Ascending aorta (tissue), 2 donors: ENCODE measurements at regions of chr1 and their contacts with region 1.

Region 1: DNA sequence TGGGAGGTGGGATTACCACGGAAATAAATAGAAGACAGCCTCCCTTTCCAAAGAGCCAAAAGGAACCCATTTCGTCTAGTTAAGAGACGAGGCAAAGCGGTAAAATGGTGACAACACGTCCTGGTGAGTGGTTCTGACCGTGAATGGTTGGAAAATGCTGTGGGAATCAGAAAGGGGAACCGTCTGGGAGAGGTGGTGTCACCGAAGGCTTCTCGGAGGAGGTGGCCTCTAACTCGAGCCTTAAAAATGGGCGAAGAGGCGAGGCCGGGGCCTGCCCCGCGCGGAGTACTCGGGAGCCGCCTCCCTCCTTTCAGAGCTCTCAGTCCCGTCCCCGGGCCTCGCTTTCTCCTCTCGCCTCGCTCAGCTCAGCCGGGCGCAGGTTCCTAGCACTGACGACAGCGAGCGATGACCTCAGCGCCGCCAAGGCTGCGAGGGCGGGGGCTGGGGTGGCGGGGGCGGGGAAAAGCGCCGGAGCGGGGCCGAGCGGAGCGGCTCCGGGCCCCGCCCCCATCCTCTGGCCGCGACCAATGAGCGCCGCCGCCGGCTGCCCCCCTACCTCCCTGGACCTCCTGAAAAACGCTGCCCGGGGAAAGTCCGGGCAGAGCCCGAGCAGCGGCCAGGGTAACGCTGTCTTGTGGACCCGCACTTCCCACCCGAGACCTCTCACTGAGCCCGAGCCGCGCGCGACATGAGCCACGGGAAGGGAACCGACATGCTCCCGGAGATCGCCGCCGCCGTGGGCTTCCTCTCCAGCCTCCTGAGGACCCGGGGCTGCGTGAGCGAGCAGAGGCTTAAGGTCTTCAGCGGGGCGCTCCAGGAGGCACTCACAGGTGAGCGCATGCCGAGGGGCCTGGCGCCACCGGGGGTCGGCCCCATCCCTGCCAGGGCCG is at the start of gene BTG2:
- DNase-seq: peak; percentile 71 to 97
- H3K4me3 ChIP-seq: peak within 1 kb of the TSS; percentile 90 to 95
- H3K27ac ChIP-seq: peak within 1 kb of the TSS; percentile 99
- H3K4me1 ChIP-seq: peaks cover 12 to 25% of the 10 kb centered on the region in 2 donors
- H3K27me3 ChIP-seq: no peaks in the 10 kb centered on the region
- CTCF ChIP-seq: no peak
- total RNA-seq, gene BTG2: 219 TPM

Region 2: DNA sequence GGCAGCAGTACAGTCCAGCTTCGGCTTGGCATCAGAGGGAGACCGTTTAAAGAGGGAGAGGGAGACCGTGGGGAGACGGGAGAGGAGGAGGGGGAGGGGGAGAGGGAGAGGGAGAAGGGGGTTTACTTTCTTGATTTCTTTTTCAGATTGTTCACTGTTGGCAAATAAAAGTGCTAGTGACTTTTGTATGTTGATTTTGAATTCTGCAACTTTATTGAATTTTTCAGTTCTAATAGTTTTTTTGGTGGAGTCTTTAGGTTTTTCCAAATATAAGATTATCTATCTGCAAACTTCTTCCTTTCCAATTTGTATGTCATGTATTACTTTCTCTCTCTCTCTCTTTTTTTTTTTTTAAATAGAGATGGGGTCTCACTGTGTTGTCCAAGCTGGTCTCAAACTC is 852.7 kb before region 1 on chr1:
- intact Hi-C with region 1: no loop called
- DNase-seq: no peak
- H3K4me3 ChIP-seq: no peak overlapping the region
- H3K27ac ChIP-seq: no peak overlapping the region
- H3K4me1 ChIP-seq: no peaks in the 10 kb centered on the region
- H3K27me3 ChIP-seq: no peaks in the 10 kb centered on the region
- CTCF ChIP-seq: no peak

Region 3: DNA sequence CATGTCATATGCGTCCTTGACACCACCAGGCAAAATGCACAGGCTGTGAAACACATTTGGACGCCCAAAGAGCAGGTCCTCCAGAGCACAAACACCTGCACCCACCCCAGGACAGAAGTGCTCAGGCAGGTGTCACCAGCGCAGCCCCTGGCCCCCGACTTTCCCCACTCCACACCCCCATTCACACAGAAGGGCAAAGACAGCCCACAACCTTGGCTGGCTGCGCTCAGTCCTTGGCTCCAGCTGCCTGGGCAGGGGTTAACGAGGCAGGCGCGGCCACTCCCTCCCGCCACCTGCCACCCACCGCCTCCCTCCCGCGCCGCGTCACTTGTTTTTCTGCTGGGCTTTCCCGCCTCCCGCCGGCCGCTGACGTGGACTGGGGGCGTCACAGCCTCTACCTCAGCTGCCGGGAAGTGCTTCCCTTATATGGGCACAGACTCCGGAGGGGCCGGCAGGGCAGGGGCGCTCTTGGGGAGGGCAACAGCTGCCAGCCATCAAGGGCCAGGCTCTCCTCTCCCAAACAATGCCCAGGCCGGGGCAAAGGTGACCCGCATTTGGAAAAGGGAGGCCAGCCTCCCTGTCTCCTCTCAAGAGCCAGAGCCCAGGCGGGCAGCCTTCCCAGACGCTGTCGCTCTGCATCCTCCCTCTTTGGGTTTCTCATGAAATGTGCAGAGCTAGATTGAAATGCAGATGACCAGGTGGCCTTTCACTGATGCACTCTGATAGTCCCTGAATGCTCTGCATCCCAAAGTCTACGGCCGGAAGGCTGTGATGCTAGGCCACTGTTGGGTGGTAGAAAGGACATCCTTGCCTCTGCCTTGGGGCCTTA is 14.7 kb before region 1 on chr1:
- intact Hi-C with region 1: loop called (anchors 1 kb)
- DNase-seq: peak; percentile 88 to 99
- H3K4me3 ChIP-seq: peak overlapping the region; percentile 37 to 44
- H3K27ac ChIP-seq: peak overlapping the region; percentile 88 to 93
- H3K4me1 ChIP-seq: peaks cover 14 to 33% of the 10 kb centered on the region in 2 donors
- H3K27me3 ChIP-seq: no peaks in the 10 kb centered on the region
- CTCF ChIP-seq: no peak

Region 4: DNA sequence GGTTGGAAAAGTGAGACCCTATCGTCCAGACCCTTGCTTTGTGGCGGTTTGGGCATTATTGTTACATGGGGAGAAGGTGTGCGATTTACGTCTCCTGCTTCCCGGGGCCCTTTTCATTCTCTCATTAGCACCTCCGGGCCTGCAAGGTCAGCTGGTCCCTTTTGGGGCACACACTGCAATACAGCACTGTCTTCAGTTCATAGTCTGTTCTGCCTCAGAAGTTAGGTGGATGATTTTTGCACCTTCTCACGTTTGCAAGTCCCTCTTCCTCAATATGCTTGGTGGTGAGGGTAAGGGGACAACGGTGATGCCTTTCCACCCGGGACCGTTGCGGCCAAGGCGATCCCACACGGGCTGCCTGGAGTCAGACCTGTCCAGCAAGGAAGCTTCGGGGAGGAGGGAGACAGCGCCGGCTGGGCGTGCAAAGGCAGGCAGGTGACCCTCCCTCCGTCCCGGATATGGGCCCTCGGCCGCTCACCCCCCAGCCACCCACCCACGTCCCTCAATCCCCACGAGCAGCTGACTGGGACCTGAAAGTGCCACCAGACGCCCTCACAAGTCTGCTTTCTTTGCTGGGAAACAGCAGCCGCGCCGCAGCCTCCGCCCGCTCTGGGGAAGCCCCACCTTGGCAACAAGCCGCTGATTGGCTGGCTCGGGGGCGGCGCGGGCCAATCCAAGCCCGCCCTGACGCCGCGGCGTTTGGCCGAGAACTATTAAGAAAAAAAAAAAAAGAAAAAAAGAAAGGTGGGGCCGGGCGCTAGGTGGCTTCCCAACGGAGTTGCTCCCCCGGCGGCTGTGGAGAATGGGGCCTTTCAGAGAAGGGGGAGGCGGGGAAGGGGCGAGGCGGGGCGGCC is 21.9 kb after region 1 on chr1:
- intact Hi-C with region 1: loop called (anchors 2 kb)
- DNase-seq: peak; percentile 79 to 97
- H3K4me3 ChIP-seq: peak overlapping the region; percentile 67
- H3K27ac ChIP-seq: peak overlapping the region; percentile 87
- H3K4me1 ChIP-seq: peaks cover 0 to 26% of the 10 kb centered on the region in 2 donors
- H3K27me3 ChIP-seq: no peaks in the 10 kb centered on the region
- CTCF ChIP-seq: no peak